HCT116 (cell line): ENCODE measurements at regions of chr10 and their contacts with region 1.

Region 1: GRCh38 chr10:121927841-121928527 is at the start of gene ATE1:
- DNase-seq: peak; percentile 88
- ATAC-seq: peak; percentile 89
- H3K4me3 ChIP-seq: peak within 1 kb of the TSS; percentile 83
- H3K27ac ChIP-seq: peak within 1 kb of the TSS; percentile 92
- H3K4me1 ChIP-seq: peaks cover 10 to 17% of the 10 kb centered on the region in 2 experiments; a peak in 3 of 4 replicates
- H3K27me3 ChIP-seq: no peaks in the 10 kb centered on the region
- CTCF ChIP-seq: no peak
- POLR2A ChIP-seq: peak; percentile 82
- RAD21 ChIP-seq: no peak
- total RNA-seq, gene ATE1: 39.2 TPM

Region 2: DNA sequence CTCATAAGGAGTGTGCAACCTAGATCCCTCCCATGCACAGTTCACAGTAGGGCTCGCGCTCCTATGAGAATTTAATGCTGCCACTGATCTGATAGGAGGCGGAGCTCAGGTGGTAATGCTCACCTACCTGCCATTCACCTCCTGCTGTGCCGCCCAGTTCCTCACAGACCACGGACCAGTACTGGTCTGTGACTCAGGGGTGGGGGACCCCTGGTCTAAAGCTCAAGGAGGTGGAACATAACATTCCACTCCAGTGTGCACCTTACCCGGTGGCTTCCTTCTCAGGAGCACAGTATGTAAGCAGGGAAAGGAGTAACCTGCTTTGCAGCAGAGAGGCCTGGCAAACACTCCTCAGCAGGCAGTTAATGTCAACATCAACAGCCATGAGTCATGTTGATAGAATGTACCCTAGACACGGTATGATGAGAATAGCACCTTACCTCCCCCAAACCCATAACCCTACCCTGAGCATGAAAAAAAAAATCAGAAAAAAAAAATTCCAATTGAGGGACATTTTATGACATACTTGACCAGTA is 603.2 kb before region 1 on chr10:
- CTCF ChIA-PET with region 1: no interaction called
- POLR2A ChIA-PET with region 1: no interaction called
- RAD21 ChIA-PET with region 1: no interaction called
- intact Hi-C with region 1: loop called (anchors 10 kb)
- DNase-seq: peak; percentile 75
- ATAC-seq: peak; percentile 81
- H3K4me3 ChIP-seq: peak overlapping the region in 1 of 2 experiments; percentile 43; a peak in 2 of 4 replicates
- H3K27ac ChIP-seq: peak overlapping the region; percentile 53; the same call in 1 of the 2 replicates
- H3K4me1 ChIP-seq: peaks cover 34 to 47% of the 10 kb centered on the region in 2 experiments
- H3K27me3 ChIP-seq: no peaks in the 10 kb centered on the region
- CTCF ChIP-seq: no peak
- POLR2A ChIP-seq: no peak
- RAD21 ChIP-seq: no peak; the same call in 1 of the 2 replicates

Region 3: DNA sequence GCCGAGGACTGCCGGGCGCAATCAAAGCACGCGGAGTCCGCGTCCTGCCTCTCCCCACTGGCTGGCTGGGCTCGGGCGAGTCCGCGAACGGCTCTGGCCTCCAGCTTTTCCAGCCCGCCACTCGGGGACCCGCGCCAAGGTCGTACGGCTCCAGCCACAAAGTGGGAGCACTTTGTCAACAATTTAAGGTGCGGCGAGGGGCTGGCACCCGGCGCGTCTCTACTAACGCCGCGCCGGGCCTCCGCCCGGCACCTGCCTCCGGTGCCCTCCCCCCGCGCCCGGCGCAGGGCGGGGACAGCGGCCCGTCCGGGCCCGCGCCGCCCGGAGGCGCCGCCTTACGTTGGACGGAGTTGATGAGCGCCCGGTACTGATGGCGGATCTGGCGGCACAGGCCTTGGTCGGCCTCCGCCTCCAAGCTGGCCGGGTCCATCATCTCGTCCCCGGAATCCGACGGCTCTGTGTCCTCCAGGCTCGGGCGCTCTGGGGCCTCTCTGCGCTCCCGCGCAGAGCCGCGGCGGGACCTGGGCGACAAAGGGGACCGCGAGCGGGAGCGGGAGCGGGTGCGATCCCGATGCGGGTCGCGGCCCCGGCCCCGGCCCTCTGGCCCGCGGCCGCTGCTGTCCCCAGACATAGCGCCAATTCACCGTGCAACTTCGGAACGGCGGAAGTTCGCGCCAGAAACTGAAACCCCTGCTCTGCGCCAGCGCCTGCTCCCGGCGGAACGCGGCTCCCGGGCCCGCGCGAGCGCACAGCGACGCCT is 46.7 kb after region 1 on chr10 and contains the start of gene NSMCE4A:
- CTCF ChIA-PET with region 1: no interaction called
- POLR2A ChIA-PET with region 1: no interaction called
- RAD21 ChIA-PET with region 1: no interaction called
- intact Hi-C with region 1: loop called (anchors 2 kb)
- DNase-seq: peak; percentile 56
- ATAC-seq: peak; percentile 88
- H3K4me3 ChIP-seq: peak within 1 kb of the TSS; percentile 80 to 83
- H3K27ac ChIP-seq: peak within 1 kb of the TSS; percentile 99
- H3K4me1 ChIP-seq: peaks cover 7 to 13% of the 10 kb centered on the region in 2 experiments; a peak in 3 of 4 replicates
- H3K27me3 ChIP-seq: no peaks in the 10 kb centered on the region
- CTCF ChIP-seq: peak in 2 of 3 experiments; percentile 77 to 81; a peak in 3 of 6 replicates
- POLR2A ChIP-seq: peak; percentile 77
- RAD21 ChIP-seq: 0 out of 2 replicates have a peak, but pooled peaks have one; percentile 19
- total RNA-seq, gene NSMCE4A: 70.6 TPM

Region 4: DNA sequence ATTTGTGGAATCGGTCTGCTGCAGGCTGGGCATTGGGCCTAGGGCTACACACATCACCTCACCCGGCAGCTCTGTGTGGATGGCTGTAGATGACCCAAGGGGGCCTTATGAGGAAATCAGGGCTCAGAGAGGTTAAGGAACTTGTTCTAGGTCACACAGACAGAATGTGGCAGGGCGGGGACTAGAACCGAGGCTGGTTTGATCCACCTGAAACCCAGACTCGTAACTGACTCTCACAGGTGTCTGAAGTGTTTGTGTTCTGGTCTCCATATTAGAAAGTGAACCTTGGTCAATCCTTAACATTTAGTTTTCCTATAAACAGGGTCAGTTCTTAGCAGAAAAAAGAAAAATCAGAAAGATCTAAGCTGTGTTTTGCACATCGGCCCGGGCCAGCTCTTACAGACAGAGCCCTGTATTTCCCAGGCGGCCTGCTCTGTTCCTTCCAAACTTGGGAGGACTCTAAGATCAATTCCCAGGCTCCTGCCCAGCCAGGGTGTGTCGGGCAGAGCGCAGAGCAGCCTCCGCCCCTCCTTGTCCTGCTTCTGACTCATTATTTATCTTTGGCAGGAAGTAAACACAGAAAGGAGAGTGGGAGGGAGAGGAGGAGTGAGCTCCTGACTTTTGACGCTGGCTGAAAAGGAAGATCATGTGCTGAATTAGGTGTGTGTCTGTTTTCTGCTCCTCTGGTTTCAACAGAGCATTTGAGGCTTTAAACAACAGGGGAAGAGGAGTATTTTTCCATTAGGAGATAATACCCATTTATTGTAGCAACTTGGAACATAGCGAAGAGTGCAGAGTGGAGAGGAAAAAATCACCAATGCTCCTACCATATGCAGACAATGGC is 135.1 kb after region 1 on chr10:
- CTCF ChIA-PET with region 1: no interaction called
- POLR2A ChIA-PET with region 1: no interaction called
- RAD21 ChIA-PET with region 1: no interaction called
- intact Hi-C with region 1: loop called (anchors 5 kb)
- DNase-seq: peak; percentile 91
- ATAC-seq: peak; percentile 98
- H3K4me3 ChIP-seq: peak overlapping the region; percentile 0 to 28; a peak in 2 of 4 replicates
- H3K27ac ChIP-seq: peak overlapping the region; percentile 74
- H3K4me1 ChIP-seq: peaks cover 31 to 35% of the 10 kb centered on the region in 2 experiments
- H3K27me3 ChIP-seq: no peaks in the 10 kb centered on the region
- CTCF ChIP-seq: no peak
- POLR2A ChIP-seq: no peak
- RAD21 ChIP-seq: peak; percentile 42

Region 5: DNA sequence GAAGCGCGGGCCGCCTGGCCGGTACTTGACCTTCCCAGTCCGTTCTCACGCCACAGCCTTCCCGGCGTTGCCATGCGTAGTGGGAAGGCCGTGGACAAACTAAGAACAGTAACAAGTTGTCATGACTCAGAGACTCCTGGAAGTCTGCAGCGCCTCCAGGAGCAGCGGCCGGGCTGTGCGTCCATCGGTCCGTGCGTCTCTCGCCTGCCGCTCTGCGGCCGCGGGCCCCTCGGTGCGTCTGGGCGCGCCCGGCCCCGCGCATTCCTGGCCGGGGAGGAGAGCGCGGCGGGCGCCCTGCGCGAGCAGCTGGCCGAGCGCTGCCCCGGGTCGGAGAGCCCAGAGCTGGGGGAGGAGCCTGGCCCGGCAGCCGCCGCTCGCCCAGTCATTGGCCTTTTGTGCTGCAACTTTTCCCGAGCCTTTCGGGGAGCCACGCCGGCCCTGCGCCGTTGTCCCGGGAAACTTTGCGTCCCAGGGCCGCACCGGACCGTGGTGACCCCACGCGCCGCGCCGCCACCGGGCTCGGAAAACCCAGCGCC is 184.7 kb after region 1 on chr10:
- CTCF ChIA-PET with region 1: interaction called, 3 read pairs
- POLR2A ChIA-PET with region 1: interaction called, 6 read pairs
- RAD21 ChIA-PET with region 1: no interaction called
- intact Hi-C with region 1: loop called (anchors 2 kb)
- DNase-seq: peak; percentile 72
- ATAC-seq: peak; percentile 88
- H3K4me3 ChIP-seq: peak overlapping the region; percentile 74 to 85
- H3K27ac ChIP-seq: peak overlapping the region; percentile 86
- H3K4me1 ChIP-seq: peaks cover 13 to 30% of the 10 kb centered on the region in 2 experiments
- H3K27me3 ChIP-seq: no peaks in the 10 kb centered on the region
- CTCF ChIP-seq: peak; percentile 41 to 93 (median 46); a peak in 4 of 6 replicates
- POLR2A ChIP-seq: peak; percentile 56
- RAD21 ChIP-seq: peak; percentile 85

Region 6: GRCh38 chr10:122142641-122143237 is 214.8 kb after region 1 on chr10:
- CTCF ChIA-PET with region 1: no interaction called
- POLR2A ChIA-PET with region 1: no interaction called
- RAD21 ChIA-PET with region 1: no interaction called
- intact Hi-C with region 1: loop called (anchors 2 kb)
- DNase-seq: no peak
- ATAC-seq: peak; percentile 52
- H3K4me3 ChIP-seq: no peak overlapping the region
- H3K27ac ChIP-seq: no peak overlapping the region; the same call in 1 of the 2 replicates
- H3K4me1 ChIP-seq: peaks cover 31 to 45% of the 10 kb centered on the region in 2 experiments
- H3K27me3 ChIP-seq: no peaks in the 10 kb centered on the region
- CTCF ChIP-seq: peak; percentile 70 to 100 (median 99)
- POLR2A ChIP-seq: no peak
- RAD21 ChIP-seq: peak; percentile 92